ENCODE measurements at regions of chrX and their contacts with region 1.

Region 1: DNA sequence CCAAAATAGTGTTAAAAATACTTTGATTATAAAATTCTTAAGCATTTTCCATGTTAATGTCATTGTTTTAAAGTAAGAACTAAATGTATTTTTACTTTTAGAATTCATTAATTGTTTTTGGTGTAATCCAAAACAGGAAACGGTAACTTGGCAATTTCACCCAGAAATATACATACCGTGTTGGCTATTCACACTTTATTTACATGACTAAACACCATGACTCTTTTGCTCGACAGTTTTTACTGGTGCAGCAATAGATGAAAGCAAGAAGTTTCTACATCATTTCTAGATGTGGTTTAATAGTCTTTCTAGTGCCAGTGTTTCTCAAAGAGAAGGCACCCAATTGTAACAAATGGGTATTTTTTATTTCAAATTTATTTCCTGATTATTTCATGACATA is 25.6 kb upstream of the MAGEA1 start:
- DNase-seq: no peak
- ATAC-seq: no peak
- H3K4me3 ChIP-seq: no peak overlapping the region
- H3K27ac ChIP-seq: no peak overlapping the region
- H3K4me1 ChIP-seq: no peaks in the 10 kb centered on the region
- H3K27me3 ChIP-seq: no peaks in the 10 kb centered on the region
- CTCF ChIP-seq: no peak
- EP300 ChIP-seq: no peak
- POLR2A ChIP-seq: no peak
- RAD21 ChIP-seq: no peak

Region 2: DNA sequence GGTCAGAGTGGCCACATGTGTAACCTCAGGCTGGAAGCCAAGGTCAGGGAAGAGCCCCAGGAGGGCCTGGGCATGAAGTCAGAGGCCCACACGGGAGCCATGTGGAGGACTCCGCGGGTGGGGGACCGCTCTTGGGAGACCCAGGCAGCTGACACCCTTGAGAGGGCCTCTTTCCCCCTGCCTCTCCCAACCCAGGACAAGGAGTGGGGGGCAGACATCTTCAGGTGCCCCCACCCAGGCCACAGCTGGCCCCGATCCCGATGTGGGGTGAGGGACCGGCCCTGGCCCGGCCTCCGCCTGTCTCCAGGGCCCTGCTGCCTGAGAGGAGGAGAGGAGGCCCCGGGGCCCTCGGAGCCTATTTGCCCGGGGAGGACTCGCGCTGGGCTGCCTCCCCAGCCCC is 78.2 kb before region 1 on chrX:
- CTCF ChIA-PET with region 1: no interaction called
- POLR2A ChIA-PET with region 1: no interaction called
- RAD21 ChIA-PET with region 1: no interaction called
- SMC1A ChIA-PET with region 1: no interaction called
- in situ Hi-C with region 1: loop called (anchors 10 kb)
- intact Hi-C with region 1: no loop called
- DNase-seq: no peak
- ATAC-seq: no peak
- H3K4me3 ChIP-seq: no peak overlapping the region
- H3K27ac ChIP-seq: no peak overlapping the region
- H3K4me1 ChIP-seq: no peaks in the 10 kb centered on the region
- H3K27me3 ChIP-seq: no peaks in the 10 kb centered on the region
- CTCF ChIP-seq: no peak
- EP300 ChIP-seq: no peak
- POLR2A ChIP-seq: no peak
- RAD21 ChIP-seq: no peak

Region 3: GRCh38 chrX:153307276-153308178 is 154.0 kb after region 1 on chrX:
- CTCF ChIA-PET with region 1: no interaction called
- POLR2A ChIA-PET with region 1: no interaction called
- RAD21 ChIA-PET with region 1: no interaction called
- SMC1A ChIA-PET with region 1: no interaction called
- in situ Hi-C with region 1: loop called (anchors 25 kb)
- intact Hi-C with region 1: no loop called
- DNase-seq: no peak
- ATAC-seq: no peak
- H3K4me3 ChIP-seq: no peak overlapping the region
- H3K27ac ChIP-seq: no peak overlapping the region
- H3K4me1 ChIP-seq: no peaks in the 10 kb centered on the region
- H3K27me3 ChIP-seq: no peaks in the 10 kb centered on the region
- CTCF ChIP-seq: no peak
- EP300 ChIP-seq: no peak
- POLR2A ChIP-seq: no peak
- RAD21 ChIP-seq: no peak